Endothelial cell of umbilical vein (primary cell): ENCODE measurements at regions of chr6 and their contacts with region 1.

Region 1: GRCh38 chr6:42043787-42044475 is 6.4 kb upstream of the TAF8 start:
- DNase-seq: peak; percentile 82
- H3K4me3 ChIP-seq: no peak overlapping the region
- H3K27ac ChIP-seq: no peak overlapping the region
- H3K4me1 ChIP-seq: peaks cover 42% of the 10 kb centered on the region
- H3K27me3 ChIP-seq: no peaks in the 10 kb centered on the region
- CTCF ChIP-seq: peak; percentile 90 to 94
- POLR2A ChIP-seq: no peak

Region 2: DNA sequence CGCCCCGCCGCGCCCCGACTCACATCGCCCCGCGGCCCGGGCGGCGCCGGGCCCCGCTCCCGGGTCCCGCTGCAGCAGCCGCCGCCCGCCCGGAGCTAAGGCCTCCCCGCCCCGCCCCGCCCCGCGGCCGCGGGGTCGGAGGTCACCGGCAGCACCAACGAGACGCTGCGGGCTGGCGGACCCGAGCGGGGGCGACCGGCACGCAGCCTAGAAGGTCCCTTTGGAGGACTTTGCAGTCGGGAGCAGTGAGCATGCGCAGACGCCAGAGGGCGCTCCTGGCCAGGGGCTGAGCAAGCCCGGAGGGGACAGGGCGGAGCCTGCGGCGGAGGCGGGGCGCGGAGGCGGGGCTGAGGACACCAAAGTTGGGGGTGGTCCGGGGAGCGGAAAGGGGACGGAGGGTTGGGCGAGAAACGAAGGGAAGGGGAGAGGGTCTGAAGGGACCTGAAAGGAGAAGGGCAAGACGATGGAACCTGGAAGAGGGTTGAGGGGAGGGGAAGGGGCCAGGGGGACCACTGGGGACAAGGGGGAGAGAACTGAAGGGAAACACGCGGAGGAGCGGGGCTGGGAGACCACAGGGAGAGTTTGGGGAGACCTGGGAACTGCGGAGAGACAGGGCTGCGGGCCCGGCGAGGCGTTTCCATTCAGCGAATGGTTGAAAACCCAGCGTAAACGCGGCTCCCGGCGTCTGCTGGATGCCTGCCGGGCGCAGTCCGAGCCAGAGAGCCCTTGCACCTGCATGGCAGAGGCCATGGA is 264.0 kb before region 1 on chr6 and contains the start of gene FRS3:
- CTCF ChIA-PET with region 1: interaction called, 78 read pairs
- POLR2A ChIA-PET with region 1: no interaction called
- dilution Hi-C with region 1: no loop called
- intact Hi-C with region 1: loop called (anchors 1 kb)
- DNase-seq: peak; percentile 95
- H3K4me3 ChIP-seq: peak within 1 kb of the TSS; percentile 73 to 86 (median 78)
- H3K27ac ChIP-seq: no peak within 1 kb of the TSS
- H3K4me1 ChIP-seq: peaks cover 18% of the 10 kb centered on the region
- H3K27me3 ChIP-seq: no peaks in the 10 kb centered on the region
- CTCF ChIP-seq: peak; percentile 93 to 98
- POLR2A ChIP-seq: no peak
- total RNA-seq, gene FRS3: 4.4 and 5.3 TPM in 2 replicates

Region 3: GRCh38 chr6:41801380-41801779 is 242.6 kb before region 1 on chr6:
- CTCF ChIA-PET with region 1: interaction called, 109 read pairs
- POLR2A ChIA-PET with region 1: no interaction called
- dilution Hi-C with region 1: no loop called
- intact Hi-C with region 1: loop called (anchors 1 kb)
- DNase-seq: peak; percentile 67
- H3K4me3 ChIP-seq: no peak overlapping the region
- H3K27ac ChIP-seq: no peak overlapping the region
- H3K4me1 ChIP-seq: no peaks in the 10 kb centered on the region
- H3K27me3 ChIP-seq: no peaks in the 10 kb centered on the region
- CTCF ChIP-seq: peak; percentile 65 to 68
- POLR2A ChIP-seq: no peak

Region 4: DNA sequence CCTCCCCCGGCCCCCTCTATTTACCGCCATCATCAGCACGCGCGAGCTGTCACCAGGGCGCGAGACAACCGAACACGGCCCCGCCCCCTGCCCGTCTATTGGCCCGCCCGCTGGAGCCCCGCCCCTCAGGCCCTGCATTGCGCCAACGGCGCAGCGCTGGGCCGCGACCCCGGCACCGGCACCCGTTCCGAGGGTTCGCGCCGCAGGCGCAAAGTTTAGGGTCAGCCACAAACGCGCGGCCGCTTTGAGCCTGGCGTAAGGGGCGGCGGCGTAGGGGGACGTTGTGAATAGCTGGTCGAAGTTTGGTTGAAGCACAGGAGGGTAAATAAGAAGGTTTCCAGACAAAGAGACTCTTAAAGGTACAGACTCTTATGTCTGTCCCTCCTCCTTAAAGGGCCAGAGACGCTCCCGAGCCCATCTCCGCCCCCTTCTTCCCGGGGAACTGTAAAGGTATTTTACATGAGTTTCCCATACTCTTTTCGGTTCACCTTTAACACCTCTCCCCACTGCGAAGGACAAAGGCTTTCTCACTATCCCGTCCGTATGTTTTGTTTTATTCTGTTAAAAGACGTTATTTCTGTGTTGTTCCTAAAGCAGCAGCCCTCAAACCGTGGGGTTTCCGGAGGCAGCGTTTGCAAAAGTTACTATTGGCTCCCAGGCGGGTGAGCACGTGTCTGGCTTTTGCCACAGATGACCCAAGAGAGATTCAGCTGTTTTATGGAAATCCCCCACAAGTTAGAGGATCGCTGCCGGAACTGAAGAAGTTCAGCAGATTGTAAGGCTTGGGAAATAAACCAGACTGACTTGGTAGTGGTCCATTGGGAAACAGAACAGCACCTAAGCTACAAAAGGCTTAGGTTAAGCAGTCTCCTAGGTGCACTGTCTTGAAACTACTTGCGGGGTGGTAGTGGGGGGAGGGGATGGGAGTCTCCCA is 148.4 kb before region 1 on chr6 and contains the start of gene USP49:
- CTCF ChIA-PET with region 1: interaction called, 9 read pairs
- POLR2A ChIA-PET with region 1: no interaction called
- dilution Hi-C with region 1: no loop called
- intact Hi-C with region 1: loop called (anchors 2 kb)
- DNase-seq: peak; percentile 89
- H3K4me3 ChIP-seq: peak within 1 kb of the TSS; percentile 70 to 78 (median 72)
- H3K27ac ChIP-seq: peak within 1 kb of the TSS; percentile 84
- H3K4me1 ChIP-seq: peaks cover 12% of the 10 kb centered on the region
- H3K27me3 ChIP-seq: peaks cover 0 to 2% of the 10 kb centered on the region in 2 experiments
- CTCF ChIP-seq: no peak
- POLR2A ChIP-seq: peak; percentile 70
- total RNA-seq, gene USP49: 4.1 and 4.5 TPM in 2 replicates

Region 5: DNA sequence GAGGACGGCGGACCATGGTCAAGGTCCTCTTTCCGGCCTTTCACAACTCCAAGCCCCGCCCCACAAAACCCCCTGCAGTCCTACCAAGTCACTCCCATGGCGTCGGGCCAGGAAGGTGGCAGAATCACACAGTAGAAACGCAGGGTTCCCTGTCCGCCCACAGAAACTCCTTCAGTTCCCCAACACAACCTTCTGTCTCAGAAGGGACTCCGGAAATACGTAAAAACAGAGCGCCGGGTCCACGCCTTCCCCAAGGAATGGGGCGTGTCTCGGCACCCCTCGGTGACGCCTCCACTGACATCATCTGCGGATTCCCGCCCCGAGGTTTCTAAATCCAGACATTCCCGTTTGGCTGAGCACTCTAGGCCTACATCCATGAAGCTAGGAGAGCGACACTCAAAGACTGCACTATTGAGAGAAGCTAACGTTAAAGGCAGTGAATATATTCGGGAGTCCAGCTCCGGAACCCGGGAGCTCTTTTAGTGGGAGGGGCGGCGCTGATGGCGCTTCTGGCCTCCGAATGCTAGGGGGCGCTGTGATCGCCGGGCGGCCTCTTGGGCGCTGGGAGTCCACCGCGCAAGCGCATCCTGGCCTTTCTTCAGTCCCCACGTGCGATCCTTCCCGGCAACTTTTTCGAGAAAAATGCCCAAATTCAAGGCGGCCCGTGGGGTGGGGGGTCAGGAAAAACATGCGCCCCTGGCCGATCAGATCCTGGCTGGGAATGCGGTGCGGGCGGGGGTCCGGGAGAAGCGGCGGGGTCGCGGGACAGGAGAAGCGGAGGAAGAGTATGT is 122.8 kb before region 1 on chr6 and contains the starts of genes BYSL and MED20:
- CTCF ChIA-PET with region 1: interaction called, 32 read pairs
- POLR2A ChIA-PET with region 1: interaction called, 4 read pairs
- dilution Hi-C with region 1: no loop called
- intact Hi-C with region 1: loop called (anchors 1 kb)
- DNase-seq: peak; percentile 93
- H3K4me3 ChIP-seq: peak within 1 kb of the TSS; percentile 54 to 83 (median 82)
- H3K27ac ChIP-seq: peak within 1 kb of the TSS; percentile 94
- H3K4me1 ChIP-seq: peaks cover 38% of the 10 kb centered on the region
- H3K27me3 ChIP-seq: no peaks in the 10 kb centered on the region
- CTCF ChIP-seq: peak; percentile 98
- POLR2A ChIP-seq: peak; percentile 72
- total RNA-seq, gene BYSL: 41.8 and 45.7 TPM in 2 replicates
- total RNA-seq, gene MED20: 25.5 and 30.4 TPM in 2 replicates

Region 6: GRCh38 chr6:41941280-41942066 is 102.5 kb before region 1 on chr6 and contains the start of gene CCND3:
- CTCF ChIA-PET with region 1: interaction called, 149 read pairs
- POLR2A ChIA-PET with region 1: interaction called, 3 read pairs
- dilution Hi-C with region 1: no loop called
- intact Hi-C with region 1: loop called (anchors 1 kb)
- DNase-seq: peak; percentile 78
- H3K4me3 ChIP-seq: peak within 1 kb of the TSS; percentile 58 to 88 (median 76)
- H3K27ac ChIP-seq: peak within 1 kb of the TSS; percentile 57
- H3K4me1 ChIP-seq: peaks cover 34% of the 10 kb centered on the region
- H3K27me3 ChIP-seq: no peaks in the 10 kb centered on the region
- CTCF ChIP-seq: no peak
- POLR2A ChIP-seq: peak; percentile 69
- total RNA-seq, gene CCND3: 87.5 and 96.7 TPM in 2 replicates

Region 7: DNA sequence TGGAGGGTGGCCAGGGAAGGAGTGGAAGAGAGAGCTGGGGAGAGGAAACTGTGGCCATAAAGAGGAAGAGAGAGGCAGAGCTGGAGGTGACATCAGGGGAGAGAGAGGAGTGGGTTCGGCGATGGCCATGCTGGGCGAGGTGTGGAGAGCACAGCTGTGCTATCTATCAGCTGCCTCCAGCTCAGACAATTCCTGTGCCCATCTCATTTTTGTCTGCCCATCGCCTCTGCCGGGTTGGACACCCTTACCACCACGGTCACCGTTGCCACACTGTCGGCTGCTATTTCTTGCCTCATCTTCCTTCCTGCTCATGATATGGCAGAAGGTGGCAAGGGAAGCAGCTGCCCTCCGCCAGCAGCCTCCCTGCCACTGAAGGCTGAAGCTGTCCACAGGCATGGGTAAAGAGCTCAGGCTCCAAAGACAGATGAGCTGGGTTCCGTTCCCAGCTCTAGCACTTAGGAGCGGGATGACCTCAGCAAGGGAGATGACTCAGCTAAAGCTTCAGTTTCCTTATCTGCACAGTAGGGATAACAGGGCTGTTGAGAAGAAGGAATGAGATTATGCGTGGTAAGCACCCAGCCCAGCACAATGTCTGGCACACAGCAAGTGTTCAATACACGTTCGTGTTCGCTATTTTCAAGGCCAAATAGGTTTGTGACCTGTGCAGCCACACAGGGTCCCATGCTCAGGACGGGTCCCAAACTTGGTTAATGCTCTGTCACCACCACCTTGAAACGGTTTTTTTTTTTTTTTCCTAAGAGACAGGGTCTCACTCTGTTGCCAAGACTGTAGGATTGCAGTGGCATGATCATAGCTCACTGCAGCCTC is 15.5 kb before region 1 on chr6:
- CTCF ChIA-PET with region 1: interaction called, 12 read pairs
- POLR2A ChIA-PET with region 1: interaction called, 3 read pairs
- dilution Hi-C with region 1: no loop called
- intact Hi-C with region 1: no loop called
- DNase-seq: peak; percentile 62
- H3K4me3 ChIP-seq: no peak overlapping the region
- H3K27ac ChIP-seq: peak overlapping the region; percentile 34
- H3K4me1 ChIP-seq: peaks cover 10% of the 10 kb centered on the region
- H3K27me3 ChIP-seq: no peaks in the 10 kb centered on the region
- CTCF ChIP-seq: no peak
- POLR2A ChIP-seq: no peak

Region 8: DNA sequence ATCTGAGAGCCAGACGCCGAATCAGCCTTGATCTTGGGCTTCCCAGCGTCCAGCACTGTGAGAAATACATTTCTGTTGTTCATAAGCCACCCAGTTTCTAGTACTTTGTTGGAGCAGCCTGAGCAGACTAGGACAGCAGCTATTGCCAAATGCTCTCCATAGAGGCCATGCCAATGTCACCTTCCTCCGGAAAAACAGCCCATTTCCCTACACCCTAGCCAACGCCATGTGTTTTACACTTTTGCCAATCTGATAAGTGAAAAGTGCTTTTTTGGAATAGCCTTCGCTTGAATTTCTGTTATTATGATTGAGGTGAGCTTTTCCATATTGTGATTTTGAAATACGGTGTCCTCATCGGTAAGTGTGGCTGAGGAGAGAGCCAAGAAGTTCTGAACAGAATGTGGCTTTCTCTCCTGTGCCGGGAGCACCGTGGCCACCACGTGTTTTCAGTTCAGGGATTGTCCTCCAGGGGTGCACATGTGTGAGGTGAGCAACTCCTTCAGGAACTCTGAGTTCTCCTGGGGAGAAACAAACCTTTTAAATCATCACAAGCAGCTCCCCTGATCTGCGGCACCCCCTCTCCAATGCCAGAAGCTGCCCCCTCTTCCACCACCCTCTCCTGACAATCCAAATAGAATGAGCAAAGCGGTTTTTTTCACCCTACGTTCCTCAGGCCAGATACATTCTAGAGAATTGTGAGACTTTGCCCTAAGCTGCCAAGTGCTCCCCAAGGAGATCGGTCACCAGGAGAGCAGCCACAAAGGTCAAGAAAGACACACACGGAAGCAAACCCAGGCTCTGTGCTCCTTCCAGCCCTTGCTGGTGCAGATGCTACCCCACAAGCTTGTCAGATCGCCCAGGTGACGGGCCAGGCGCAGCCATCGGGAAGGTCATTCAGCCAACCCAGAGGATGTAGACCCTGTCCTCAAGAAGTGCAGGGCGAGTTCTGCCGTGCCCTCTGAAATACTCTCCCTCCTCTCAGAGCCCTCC is 42.4 kb after region 1 on chr6:
- CTCF ChIA-PET with region 1: no interaction called
- POLR2A ChIA-PET with region 1: no interaction called
- dilution Hi-C with region 1: no loop called
- intact Hi-C with region 1: no loop called
- DNase-seq: peak; percentile 73
- H3K4me3 ChIP-seq: no peak overlapping the region
- H3K27ac ChIP-seq: no peak overlapping the region
- H3K4me1 ChIP-seq: peaks cover 5% of the 10 kb centered on the region
- H3K27me3 ChIP-seq: no peaks in the 10 kb centered on the region
- CTCF ChIP-seq: peak; percentile 31 to 51
- POLR2A ChIP-seq: no peak

Region 9: GRCh38 chr6:42315991-42316378 is 272.1 kb after region 1 on chr6:
- CTCF ChIA-PET with region 1: no interaction called
- POLR2A ChIA-PET with region 1: no interaction called
- dilution Hi-C with region 1: no loop called
- intact Hi-C with region 1: no loop called
- DNase-seq: peak; percentile 82
- H3K4me3 ChIP-seq: no peak overlapping the region
- H3K27ac ChIP-seq: peak overlapping the region; percentile 51
- H3K4me1 ChIP-seq: peaks cover 21% of the 10 kb centered on the region
- H3K27me3 ChIP-seq: no peaks in the 10 kb centered on the region
- CTCF ChIP-seq: no peak
- POLR2A ChIP-seq: no peak

Region 10: GRCh38 chr6:42453031-42453653 is 409.2 kb after region 1 on chr6:
- CTCF ChIA-PET with region 1: no interaction called
- POLR2A ChIA-PET with region 1: no interaction called
- dilution Hi-C with region 1: no loop called
- intact Hi-C with region 1: no loop called
- DNase-seq: peak; percentile 52
- H3K4me3 ChIP-seq: peak overlapping the region; percentile 49 to 73 (median 51)
- H3K27ac ChIP-seq: no peak overlapping the region
- H3K4me1 ChIP-seq: peaks cover 9% of the 10 kb centered on the region
- H3K27me3 ChIP-seq: peaks cover 11 to 37% of the 10 kb centered on the region in 2 experiments
- CTCF ChIP-seq: no peak
- POLR2A ChIP-seq: no peak